HEK293 (cell line): ENCODE measurements at regions of chr5 and their contacts with region 1.

Region 1: DNA sequence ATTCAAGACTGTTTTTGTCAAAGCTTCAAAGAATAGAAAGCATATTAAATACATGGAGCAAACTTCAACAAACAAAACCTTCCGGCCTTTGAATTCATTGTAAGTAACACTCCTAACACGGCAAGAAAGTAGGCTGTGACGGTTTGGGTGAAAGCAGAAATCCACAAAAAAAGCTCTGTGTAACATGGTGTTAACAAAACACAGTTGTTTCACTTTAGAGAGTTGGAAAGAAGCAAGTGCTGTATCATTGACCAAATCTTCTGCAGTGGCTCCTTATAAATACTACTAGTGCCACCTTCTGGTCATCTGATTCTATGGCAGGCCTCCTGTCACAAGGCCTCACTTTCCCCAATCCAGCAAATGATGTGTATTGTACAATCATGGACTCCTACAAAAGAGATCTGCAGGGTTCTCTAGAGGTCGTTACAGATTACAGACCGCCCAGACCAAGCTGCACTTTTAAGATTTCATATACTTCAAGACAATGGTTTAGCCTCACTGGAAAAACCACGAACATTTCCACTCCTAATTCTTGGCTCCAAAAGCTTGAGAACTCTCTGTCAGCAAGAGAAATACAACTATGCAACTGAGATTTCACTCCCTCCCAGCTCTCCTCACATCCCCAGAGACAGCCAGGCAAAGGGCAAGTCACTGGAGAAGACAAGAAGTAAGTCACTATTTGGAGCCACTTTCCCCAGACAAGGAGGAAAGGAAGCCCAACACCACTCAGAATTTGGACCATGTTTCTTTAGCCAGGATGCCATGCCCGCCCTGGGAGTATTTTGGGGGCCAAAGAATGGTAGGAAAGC is 196.2 kb downstream of the DTWD2 start:
- H3K4me3 ChIP-seq: no peak overlapping the region
- H3K27ac ChIP-seq: no peak overlapping the region
- H3K4me1 ChIP-seq: no peaks in the 10 kb centered on the region
- CTCF ChIP-seq: no peak

Region 2: DNA sequence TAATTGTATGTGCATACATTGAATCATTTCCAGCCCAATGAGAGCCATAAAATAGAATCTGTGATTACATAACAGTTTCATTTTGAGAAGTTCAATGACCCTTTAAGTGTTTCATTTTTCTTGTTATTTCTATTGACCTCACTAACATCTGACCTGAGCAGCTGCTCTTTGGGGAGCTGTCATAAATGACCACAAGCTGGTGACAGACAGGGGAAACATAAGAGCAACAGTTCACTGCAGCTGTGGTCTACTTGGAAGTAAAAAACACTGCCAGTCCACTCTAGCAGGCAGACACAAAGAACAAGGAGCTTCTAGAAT is 69.2 kb before region 1 on chr5:
- CTCF ChIA-PET with region 1: no interaction called
- POLR2A ChIA-PET with region 1: no interaction called
- H3K4me3 ChIP-seq: no peak overlapping the region
- H3K27ac ChIP-seq: no peak overlapping the region
- H3K4me1 ChIP-seq: no peaks in the 10 kb centered on the region
- CTCF ChIP-seq: no peak

Region 3: GRCh38 chr5:118802335-118802734 is 10.2 kb after region 1 on chr5:
- CTCF ChIA-PET with region 1: interaction called, 10 read pairs
- POLR2A ChIA-PET with region 1: no interaction called
- H3K4me3 ChIP-seq: no peak overlapping the region
- H3K27ac ChIP-seq: no peak overlapping the region
- H3K4me1 ChIP-seq: no peaks in the 10 kb centered on the region
- CTCF ChIP-seq: no peak

Region 4: DNA sequence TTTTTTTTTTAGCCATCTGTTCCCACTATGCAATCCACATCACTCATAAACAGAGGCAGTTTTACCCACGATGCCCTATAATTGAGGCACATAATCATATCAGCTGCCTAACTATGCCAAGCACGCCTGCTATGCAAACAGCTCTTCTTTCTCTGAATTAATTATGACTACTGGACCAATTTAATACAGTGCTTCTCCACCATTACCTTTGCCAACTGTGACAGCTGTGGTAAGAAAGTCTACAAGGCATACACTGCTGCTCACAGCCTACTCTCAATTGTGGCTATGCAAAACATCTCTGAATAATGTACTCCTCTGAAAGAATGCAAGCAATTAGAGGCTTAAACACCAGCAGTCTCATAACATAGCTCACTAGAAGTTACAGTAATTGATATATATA is 99.1 kb after region 1 on chr5:
- CTCF ChIA-PET with region 1: no interaction called
- POLR2A ChIA-PET with region 1: no interaction called
- H3K4me3 ChIP-seq: no peak overlapping the region
- H3K27ac ChIP-seq: no peak overlapping the region
- H3K4me1 ChIP-seq: peaks cover 5% of the 10 kb centered on the region; the same call in 1 of the 2 replicates
- CTCF ChIP-seq: no peak